ENCODE measurements at regions of chr4 and their contacts with region 1.

Region 1: GRCh38 chr4:22014222-22014741 is 65.7 kb upstream of the KCNIP4 start:
- DNase-seq: no peak
- ATAC-seq: no peak

Region 2: GRCh38 chr4:22055954-22056353 is 41.7 kb after region 1 on chr4:
- intact Hi-C with region 1: no loop called
- DNase-seq: no peak
- ATAC-seq: no peak

Region 3: DNA sequence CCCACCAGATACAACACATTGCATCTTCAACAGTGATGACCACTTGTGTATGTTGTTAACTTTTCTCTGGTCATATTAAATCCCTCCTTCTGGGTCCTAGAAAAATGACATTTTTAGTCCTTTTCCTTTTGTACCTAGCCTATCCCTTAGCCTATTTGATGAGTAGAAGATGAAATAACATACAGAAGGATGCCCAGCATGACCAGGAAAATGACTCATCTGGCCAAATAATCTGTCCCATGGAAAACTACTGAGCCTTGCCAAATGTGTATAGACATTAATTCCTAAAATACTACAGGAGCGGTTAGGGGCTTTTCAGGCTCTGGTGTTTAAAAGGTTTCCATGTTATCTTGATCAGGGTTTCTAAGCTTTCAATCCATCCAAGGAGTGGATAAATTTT is 63.3 kb after region 1 on chr4:
- intact Hi-C with region 1: loop called (anchors 2 kb)
- DNase-seq: no peak
- ATAC-seq: no peak

Region 4: DNA sequence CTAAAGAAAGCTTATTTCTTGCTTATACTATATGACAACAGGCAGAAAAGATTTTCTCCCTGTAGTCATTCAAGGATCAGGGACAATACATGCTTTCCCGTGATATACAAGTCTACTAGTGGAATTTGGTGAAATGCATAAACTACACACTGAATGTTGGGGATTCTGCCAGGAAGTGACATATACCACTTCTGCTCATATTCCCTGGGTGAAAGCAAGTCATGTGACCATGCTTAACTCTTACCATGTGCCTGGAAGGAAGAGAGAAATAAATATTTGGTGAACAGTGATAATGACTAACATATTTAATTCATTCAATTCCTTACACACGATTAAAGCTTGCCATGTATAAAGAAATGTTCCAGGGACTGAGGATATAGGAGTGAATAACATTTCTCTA is 1341.0 kb after region 1 on chr4:
- intact Hi-C with region 1: no loop called
- DNase-seq: no peak
- ATAC-seq: no peak